Mammary epithelial cell (primary cell): ENCODE measurements at regions of chr9 and their contacts with region 1.

Region 1: DNA sequence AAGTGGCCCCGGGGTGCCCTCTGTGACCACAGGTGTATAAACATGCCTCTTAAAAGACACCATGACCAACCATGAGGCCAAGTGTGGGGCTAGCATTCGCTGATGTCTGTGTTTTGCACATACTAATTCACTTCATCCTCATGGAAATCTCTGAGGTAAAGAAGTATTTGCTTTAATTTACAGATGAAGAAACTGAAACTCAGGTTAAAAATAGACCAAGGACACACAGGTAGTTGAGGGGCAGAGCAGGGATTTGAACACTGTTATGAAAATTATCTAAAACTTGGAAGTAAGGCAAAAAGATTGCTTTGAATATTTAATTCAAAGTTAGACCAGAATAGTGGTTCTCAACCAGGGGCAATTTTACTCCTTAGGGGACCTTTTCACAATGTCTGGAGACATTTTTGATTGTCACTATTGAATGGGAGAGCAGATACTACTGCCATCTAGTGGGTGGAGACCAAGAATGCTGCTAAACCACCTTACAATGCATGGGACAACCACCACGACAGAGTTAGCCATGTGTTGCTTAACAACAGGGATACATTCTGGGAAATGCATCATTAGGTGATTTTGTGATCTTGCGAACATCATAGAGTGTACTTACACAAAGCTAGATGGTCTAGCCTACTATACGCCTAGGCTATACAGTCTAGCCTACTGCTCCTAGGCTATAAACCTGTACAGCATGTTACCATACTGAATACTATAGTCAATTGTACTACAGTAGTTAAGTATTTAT is 8.0 kb upstream of the FXN start:
- DNase-seq: peak; percentile 45
- H3K4me3 ChIP-seq: no peak overlapping the region
- H3K27ac ChIP-seq: no peak overlapping the region
- H3K4me1 ChIP-seq: peaks cover 3% of the 10 kb centered on the region
- H3K27me3 ChIP-seq: no peaks in the 10 kb centered on the region
- CTCF ChIP-seq: peak; percentile 79 to 85

Region 2: GRCh38 chr9:68999393-69000105 is 28.0 kb before region 1 on chr9:
- CTCF ChIA-PET with region 1: no interaction called
- dilution Hi-C with region 1: no loop called
- in situ Hi-C with region 1: no loop called
- intact Hi-C with region 1: loop called (anchors 1 kb)
- DNase-seq: peak; percentile 54
- H3K4me3 ChIP-seq: no peak overlapping the region
- H3K27ac ChIP-seq: no peak overlapping the region
- H3K4me1 ChIP-seq: no peaks in the 10 kb centered on the region
- H3K27me3 ChIP-seq: no peaks in the 10 kb centered on the region
- CTCF ChIP-seq: peak; percentile 90 to 97

Region 3: DNA sequence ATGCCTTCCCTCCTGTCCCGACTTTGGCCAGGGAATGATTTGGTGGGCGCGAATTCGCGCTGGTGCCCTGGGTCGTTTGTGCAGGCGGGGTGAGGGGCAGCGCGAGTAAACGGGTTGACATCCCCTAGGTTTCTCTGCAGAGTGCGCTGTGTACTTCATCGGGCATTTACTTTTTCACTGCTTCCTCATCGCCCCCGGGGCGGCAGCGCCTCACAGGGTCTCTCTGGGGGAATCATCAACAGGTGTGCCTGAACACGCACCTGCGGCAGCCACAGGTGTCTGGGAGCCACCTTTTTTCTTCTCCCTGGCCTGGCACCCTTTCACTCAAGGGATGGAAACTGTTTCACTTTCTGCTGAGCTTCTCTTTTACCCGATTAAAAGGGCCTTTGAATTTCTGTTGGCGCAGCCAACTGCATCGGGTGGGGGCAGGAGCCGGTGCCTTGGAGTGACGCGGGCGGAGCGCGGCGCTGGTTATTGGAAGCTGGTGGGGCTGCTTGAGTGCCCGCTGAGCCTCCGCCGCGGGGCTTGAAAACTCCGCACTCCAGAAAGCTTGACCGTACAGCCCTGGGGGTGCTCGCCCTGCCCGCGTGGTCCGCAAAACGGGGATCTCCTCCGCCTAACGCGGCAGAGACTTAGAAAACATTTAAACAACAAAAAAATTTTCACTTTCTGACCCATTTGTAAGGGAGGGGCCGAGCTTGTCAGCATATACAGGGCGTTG is 94.5 kb after region 1 on chr9:
- CTCF ChIA-PET with region 1: no interaction called
- dilution Hi-C with region 1: no loop called
- in situ Hi-C with region 1: no loop called
- intact Hi-C with region 1: no loop called
- DNase-seq: peak; percentile 67
- H3K4me3 ChIP-seq: peak overlapping the region; percentile 43 to 83 (median 81)
- H3K27ac ChIP-seq: peak overlapping the region; percentile 57
- H3K4me1 ChIP-seq: peaks cover 12% of the 10 kb centered on the region
- H3K27me3 ChIP-seq: no peaks in the 10 kb centered on the region
- CTCF ChIP-seq: peak in 1 of 2 donors; percentile 15